HAP-1 (cell line): ENCODE measurements at regions of chr2 and their contacts with region 1.

Region 1: DNA sequence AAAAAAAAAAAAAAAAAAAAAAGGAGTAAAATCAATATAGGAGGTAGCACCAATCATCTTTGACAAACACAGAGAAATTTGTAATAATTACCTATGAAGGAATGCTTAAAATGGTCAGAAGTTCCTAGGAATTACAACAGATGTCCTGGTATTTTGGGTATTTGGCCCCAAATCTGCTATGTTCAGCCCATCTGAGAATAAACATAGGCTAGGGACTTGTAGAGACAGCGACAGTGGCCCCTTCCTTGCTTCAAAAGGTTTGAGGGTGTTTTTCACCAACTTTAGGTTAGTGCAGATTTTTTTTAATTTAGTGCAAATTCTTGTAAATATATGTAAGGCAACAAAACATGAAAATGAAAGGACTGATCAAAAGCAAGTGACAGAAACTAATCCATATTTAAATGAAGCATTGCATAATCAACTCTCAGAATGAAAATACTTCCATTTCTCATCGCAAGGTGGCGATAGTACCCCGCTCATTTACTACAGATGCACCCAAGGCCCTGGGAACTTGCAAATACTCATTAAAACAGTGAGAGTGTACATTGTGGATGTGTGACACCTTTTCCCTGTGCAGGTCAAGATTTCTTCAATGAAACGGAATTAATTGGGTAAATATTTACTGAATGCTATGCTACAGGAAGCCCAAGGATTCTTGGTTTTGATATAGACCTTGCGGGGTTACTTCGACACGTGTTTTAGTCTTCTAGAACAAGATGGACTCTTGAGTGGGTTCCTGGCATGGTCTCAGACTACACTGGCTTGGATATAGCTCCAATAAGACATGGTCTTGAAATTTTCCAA is 44.6 kb downstream of the FAM124B start:
- DNase-seq: peak; percentile 58 to 74
- H3K4me3 ChIP-seq: no peak overlapping the region
- H3K4me1 ChIP-seq: 0 out of 2 replicates have a peak, but pooled peaks cover 2% of the 10 kb centered on the region
- H3K27me3 ChIP-seq: peaks cover 3% of the 10 kb centered on the region

Region 2: DNA sequence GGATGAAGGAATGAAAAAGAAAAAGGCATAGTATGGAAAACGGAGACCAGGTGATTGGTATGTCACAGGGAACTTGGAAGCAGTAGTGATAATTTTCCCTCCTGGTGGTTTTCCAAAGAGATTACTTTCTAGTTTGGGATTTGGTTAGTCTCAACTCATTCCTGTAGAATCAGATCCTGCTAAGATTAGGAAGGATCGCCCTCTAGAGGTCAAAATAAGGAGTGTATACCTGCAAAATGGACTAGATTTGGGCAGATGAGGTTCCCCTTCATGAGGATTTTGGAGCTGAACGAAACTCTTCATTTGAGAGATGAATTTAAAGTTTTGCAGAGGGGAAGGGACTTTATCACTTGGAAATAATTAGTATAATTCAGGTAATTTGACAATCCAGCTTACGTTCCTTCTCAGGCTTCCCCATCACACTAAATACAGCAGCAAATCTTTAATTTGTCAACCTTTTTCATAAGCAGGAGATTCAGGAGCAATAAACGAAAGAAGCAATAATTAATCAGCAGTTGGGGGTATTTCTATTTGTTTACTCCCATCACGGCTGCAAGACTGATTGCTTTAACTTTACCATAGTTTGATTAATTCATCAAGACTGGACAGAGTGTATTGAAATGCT is 293.6 kb after region 1 on chr2:
- in situ Hi-C with region 1: loop called (anchors 5 kb)
- DNase-seq: peak; percentile 23 to 55
- H3K4me3 ChIP-seq: no peak overlapping the region
- H3K4me1 ChIP-seq: no peaks in the 10 kb centered on the region
- H3K27me3 ChIP-seq: 0 out of 2 replicates have a peak, but pooled peaks cover 4% of the 10 kb centered on the region

Region 3: DNA sequence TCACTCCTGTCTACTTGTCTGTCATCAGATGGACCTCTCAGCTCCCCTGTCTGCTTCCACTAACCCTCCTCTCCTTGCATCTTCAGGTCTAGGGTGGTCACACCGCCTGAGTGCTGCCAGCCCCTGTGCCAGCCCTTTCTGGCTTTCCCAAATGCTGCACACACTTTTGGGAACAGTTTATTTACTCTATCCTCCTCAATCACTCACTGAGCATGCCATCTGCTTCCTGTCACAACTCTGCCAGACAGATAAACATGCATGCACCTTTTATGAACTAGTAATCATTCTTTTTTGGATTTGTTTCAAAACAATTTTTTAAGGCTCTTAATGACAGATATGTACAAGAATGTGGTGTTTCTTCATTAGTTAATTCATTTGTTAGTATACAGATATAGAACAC is 415.2 kb after region 1 on chr2:
- in situ Hi-C with region 1: loop called (anchors 5 kb)
- DNase-seq: no peak
- H3K4me3 ChIP-seq: no peak overlapping the region
- H3K4me1 ChIP-seq: no peaks in the 10 kb centered on the region
- H3K27me3 ChIP-seq: no peaks in the 10 kb centered on the region

Region 4: DNA sequence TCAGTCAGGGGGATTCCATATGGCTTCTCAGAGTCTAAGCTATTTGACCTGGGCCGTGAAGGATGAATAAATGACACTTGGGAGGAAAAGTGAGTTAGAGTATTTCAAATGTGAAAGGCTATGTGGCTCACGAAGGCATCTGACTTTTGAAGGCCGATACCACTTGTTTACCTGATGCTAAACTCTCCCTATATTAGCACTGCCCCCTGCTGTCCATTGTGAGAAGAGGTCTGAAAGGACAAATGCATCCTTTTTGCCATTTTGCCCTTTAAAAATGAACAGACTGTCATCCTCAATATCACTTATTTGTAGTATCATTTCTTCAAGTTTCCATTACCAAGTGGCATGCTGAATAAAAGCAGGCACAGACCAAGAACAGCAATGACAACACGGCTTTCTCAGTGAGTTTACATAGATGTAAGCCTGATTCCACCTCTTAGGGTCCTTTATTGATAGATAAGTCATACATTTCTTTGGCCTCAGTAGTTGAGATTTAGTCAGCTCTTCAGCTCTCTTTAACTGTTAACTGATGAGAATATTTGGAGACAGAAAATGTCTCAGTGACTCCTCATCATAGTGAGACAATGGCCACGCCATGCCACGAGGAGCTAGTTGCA is 644.8 kb after region 1 on chr2:
- in situ Hi-C with region 1: loop called (anchors 25 kb)
- DNase-seq: peak; percentile 48 to 67
- H3K4me3 ChIP-seq: no peak overlapping the region
- H3K4me1 ChIP-seq: no peaks in the 10 kb centered on the region
- H3K27me3 ChIP-seq: no peaks in the 10 kb centered on the region; the same call in 1 of the 2 replicates